Transverse colon (tissue), 4 donors: ENCODE measurements at regions of chrX and their contacts with region 1.

Region 1: GRCh38 chrX:72652082-72652481 is 62.0 kb downstream of the PHKA1 start:
- DNase-seq: no peak
- H3K4me3 ChIP-seq: no peak overlapping the region
- H3K27ac ChIP-seq: no peak overlapping the region
- H3K4me1 ChIP-seq: no peaks in the 10 kb centered on the region
- H3K27me3 ChIP-seq: no peaks in the 10 kb centered on the region
- CTCF ChIP-seq: no peak
- EP300 ChIP-seq: no peak
- POLR2A ChIP-seq: no peak

Region 2: DNA sequence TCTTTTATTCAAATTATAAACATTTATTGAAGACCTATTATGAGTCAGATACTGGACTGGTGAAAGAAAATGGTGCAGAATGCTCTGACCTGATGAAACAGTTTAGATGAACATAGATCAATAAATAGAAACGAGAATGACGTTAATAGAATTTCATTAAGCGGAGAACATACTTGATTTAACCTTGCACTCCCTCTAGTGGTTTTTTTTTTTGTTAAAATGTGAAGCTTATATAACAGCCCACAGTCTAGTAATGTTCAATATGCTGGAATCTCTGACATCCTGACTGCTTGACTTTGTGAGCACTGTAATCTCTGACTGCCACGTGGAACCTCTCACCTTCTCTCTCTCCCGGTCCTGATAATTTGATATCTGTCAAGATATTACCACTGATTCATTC is 111.8 kb before region 1 on chrX:
- in situ Hi-C with region 1: no loop called
- intact Hi-C with region 1: no loop called
- DNase-seq: no peak
- H3K4me3 ChIP-seq: no peak overlapping the region
- H3K27ac ChIP-seq: no peak overlapping the region
- H3K4me1 ChIP-seq: peaks cover 0 to 4% (median 0%) of the 10 kb centered on the region in 4 donors
- H3K27me3 ChIP-seq: no peaks in the 10 kb centered on the region
- CTCF ChIP-seq: no peak
- EP300 ChIP-seq: no peak
- POLR2A ChIP-seq: no peak

Region 3: DNA sequence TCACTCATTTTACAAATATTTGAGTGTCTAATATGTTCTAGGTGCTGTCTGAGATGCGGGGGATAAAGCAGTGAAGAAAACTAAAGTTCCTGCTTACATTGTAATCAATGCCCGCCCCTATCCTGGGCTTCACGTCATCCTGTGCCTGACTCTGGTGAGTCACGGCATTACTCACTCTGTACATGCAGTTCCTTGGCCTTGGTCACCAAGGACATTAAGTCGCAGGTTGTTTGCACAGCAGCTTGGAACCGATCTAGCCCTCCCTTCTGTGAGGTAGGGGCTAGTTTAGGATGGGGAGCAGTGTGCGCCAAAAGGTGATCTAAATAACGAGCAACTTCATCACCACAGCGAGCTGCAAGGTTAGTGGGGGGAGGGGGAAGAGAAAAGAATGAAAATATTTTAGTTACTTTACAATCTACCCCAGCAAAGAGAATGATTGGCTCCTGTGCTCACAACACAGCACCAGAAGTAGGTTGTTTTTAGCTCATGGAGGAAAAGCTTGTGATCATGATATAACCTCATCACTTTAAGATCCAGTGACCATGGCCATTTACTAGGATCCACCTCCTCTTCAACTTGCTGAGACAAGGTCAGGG is 31.4 kb before region 1 on chrX:
- in situ Hi-C with region 1: no loop called
- intact Hi-C with region 1: loop called (anchors 1 kb)
- DNase-seq: peak; percentile 26
- H3K4me3 ChIP-seq: no peak overlapping the region
- H3K27ac ChIP-seq: no peak overlapping the region
- H3K4me1 ChIP-seq: no peaks in the 10 kb centered on the region
- H3K27me3 ChIP-seq: no peaks in the 10 kb centered on the region
- CTCF ChIP-seq: no peak
- EP300 ChIP-seq: no peak
- POLR2A ChIP-seq: no peak

Region 4: DNA sequence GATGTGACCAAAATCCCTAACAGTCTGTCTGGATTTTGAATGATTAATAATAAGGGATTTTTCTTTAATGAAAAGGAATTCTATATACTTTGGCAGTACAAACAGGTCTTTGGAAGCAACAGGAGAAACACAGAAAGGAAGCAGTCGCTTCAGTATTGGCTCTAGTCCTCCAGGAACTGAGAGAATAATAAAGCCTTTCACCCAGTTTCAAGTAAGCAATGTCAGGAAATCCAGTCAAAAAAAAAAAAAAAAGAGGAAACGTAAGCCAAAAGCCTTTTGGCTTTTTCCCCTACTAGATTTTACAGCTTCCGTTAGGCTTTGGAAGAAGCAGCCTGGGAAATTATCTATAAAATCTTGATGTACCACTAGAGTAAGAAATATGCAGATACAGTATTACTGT is 17.8 kb before region 1 on chrX:
- in situ Hi-C with region 1: no loop called
- intact Hi-C with region 1: no loop called
- DNase-seq: no peak
- H3K4me3 ChIP-seq: no peak overlapping the region
- H3K27ac ChIP-seq: no peak overlapping the region
- H3K4me1 ChIP-seq: no peaks in the 10 kb centered on the region
- H3K27me3 ChIP-seq: no peaks in the 10 kb centered on the region
- CTCF ChIP-seq: no peak
- EP300 ChIP-seq: no peak
- POLR2A ChIP-seq: no peak